Activated CD4-positive, alpha-beta T cell treated with anti-CD3 and anti-CD28 coated beads for 36 hours (primary cell): ENCODE measurements at regions of chr14 and their contacts with region 1.

Region 1: DNA sequence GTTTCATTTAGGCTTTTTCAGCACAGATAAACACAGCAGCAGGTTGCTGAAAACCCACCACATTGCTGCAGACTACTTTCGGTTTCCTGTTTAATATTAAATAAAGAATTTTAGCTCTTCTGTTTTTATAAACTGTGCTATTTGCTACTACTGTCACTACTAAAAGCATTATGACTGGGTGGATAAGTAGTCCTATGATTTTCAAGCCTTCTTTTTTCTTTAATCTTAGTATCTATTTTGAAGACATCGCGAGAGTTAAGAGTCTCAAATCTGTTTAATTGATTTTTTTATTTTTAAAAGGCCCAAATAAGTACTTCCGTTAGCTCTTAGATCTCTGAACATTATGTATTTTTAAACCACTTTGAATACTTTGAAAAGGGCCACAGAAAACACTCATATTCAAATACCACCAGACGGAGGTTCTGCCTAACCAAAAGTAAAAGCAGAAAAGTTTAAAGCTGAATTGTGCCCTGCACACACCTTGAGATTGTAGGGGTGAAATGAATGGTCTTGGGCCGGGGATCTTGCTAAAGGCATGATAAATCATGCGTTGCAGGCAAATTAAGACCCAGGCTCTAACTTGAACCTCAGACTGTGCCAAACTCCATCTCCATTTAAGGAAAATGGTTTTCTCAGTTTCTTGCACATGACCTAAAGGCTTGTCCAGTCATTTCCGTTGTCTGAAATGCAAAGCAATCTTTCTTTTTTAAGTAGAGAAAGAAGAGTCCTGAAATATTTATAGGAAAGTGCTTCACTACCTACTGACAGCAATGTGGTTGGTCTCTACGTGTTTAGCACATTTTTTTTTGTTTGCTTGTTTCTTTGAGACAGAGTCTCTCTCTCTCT is 13.6 kb upstream of the FOXN3 start:
- DNase-seq: peak; percentile 75
- ATAC-seq: peak; percentile 89
- H3K4me3 Mint-ChIP-seq: peak overlapping the region; percentile 71
- H3K27ac Mint-ChIP-seq: peak overlapping the region; percentile 94
- H3K4me1 Mint-ChIP-seq: peaks cover 70% of the 10 kb centered on the region
- H3K27me3 Mint-ChIP-seq: no peaks in the 10 kb centered on the region

Region 2: GRCh38 chr14:88792572-88793258 is 637.9 kb before region 1 on chr14 and contains the start of gene EML5:
- CTCF ChIA-PET with region 1: no interaction called
- POLR2A ChIA-PET with region 1: no interaction called
- intact Hi-C with region 1: loop called in 1 of 2 experiments (anchors 5 kb)
- DNase-seq: peak; percentile 90
- ATAC-seq: peak; percentile 76
- H3K4me3 Mint-ChIP-seq: peak within 1 kb of the TSS; percentile 87
- H3K27ac Mint-ChIP-seq: peak within 1 kb of the TSS; percentile 87
- H3K4me1 Mint-ChIP-seq: peaks cover 26% of the 10 kb centered on the region
- H3K27me3 Mint-ChIP-seq: no peaks in the 10 kb centered on the region
- total RNA-seq, gene EML5: 8.1 TPM

Region 3: GRCh38 chr14:89406941-89407340 is 23.7 kb before region 1 on chr14:
- CTCF ChIA-PET with region 1: interaction called, 11 read pairs
- POLR2A ChIA-PET with region 1: no interaction called
- intact Hi-C with region 1: no loop called
- DNase-seq: no peak
- ATAC-seq: no peak
- H3K4me3 Mint-ChIP-seq: no peak overlapping the region
- H3K27ac Mint-ChIP-seq: peak overlapping the region; percentile 86
- H3K4me1 Mint-ChIP-seq: peaks cover 76% of the 10 kb centered on the region
- H3K27me3 Mint-ChIP-seq: no peaks in the 10 kb centered on the region

Region 4: DNA sequence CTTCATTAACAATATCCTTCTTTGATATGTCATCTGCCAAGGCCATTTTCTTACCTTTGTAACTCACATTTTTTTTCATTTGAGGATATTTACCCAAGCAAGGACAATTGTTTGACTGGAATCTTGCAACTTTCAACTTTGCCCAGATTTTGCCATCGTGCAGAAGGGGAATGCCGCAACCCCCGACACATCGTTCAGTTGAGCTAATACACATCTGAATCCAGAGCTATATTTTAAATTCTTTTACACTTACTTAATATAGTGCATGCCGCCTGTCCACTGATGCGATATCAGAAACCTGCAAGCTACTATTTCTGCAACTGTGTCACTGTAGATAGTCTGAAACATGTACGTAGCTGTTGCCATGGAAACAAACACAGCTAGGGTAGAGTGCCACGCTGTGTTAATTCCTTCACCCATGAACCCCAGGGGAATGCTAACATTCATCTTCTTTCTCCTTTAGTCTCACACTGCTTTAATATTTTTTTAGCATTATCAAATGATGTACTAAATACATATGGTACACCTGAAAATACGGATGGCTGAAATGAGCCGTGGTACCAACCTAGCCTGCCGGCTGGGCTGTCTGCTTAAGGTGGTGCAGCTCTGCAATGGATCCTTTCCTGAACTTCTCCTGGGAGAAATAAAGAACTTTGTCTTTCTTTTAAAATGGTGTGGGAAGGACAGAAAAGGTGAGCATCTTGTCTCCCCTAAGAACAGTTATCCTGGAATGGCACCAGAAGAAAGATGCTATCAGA is 63.4 kb after region 1 on chr14:
- CTCF ChIA-PET with region 1: no interaction called
- POLR2A ChIA-PET with region 1: no interaction called
- intact Hi-C with region 1: no loop called
- DNase-seq: no peak
- ATAC-seq: no peak
- H3K4me3 Mint-ChIP-seq: no peak overlapping the region
- H3K27ac Mint-ChIP-seq: no peak overlapping the region
- H3K4me1 Mint-ChIP-seq: peaks cover 9% of the 10 kb centered on the region
- H3K27me3 Mint-ChIP-seq: no peaks in the 10 kb centered on the region

Region 5: GRCh38 chr14:89504602-89505313 is 74.1 kb after region 1 on chr14:
- CTCF ChIA-PET with region 1: no interaction called
- POLR2A ChIA-PET with region 1: interaction called, 3 read pairs
- intact Hi-C with region 1: loop called in 1 of 2 experiments (anchors 1 kb)
- DNase-seq: peak; percentile 59
- ATAC-seq: peak; percentile 40
- H3K4me3 Mint-ChIP-seq: no peak overlapping the region
- H3K27ac Mint-ChIP-seq: peak overlapping the region; percentile 23
- H3K4me1 Mint-ChIP-seq: peaks cover 53% of the 10 kb centered on the region
- H3K27me3 Mint-ChIP-seq: no peaks in the 10 kb centered on the region

Region 6: DNA sequence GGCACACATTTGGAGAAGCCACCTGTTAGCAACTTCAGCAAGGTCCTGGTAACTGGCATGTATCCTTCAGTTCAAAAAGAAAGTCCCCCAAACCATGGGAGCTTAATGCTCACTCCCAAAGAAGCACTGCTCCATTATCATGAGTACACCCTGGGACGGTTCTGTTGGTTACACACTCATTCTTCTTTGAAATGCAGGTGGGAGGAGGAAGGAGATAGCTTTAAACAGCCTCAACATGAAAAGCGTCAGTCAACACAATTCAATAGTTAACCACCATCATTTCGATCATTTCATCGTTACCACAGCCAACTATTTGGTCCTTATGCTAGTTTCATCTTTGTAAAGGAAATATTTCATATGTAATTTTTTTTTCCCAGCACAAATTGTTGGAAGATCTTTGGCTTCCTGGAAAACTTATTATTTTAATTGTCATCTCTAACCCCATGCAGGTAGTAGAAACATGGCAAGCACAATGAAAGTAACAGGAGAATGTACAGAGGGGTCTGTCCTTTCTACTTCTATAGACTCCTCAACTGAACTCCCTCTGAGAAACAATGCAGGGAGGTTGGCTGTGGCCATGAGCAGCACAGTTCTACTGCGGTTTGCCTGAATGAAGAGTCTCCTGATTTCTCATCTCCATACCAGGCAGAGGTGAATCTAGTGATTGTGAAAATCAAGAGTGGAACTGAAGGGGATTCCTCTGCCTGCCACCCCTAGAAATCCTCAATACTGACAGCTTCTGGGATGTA is 182.8 kb after region 1 on chr14:
- CTCF ChIA-PET with region 1: interaction called, 4 read pairs
- POLR2A ChIA-PET with region 1: interaction called, 4 read pairs
- intact Hi-C with region 1: loop called in 1 of 2 experiments (anchors 1 kb)
- DNase-seq: peak; percentile 64
- ATAC-seq: peak; percentile 70
- H3K4me3 Mint-ChIP-seq: peak overlapping the region; percentile 62
- H3K27ac Mint-ChIP-seq: peak overlapping the region; percentile 92
- H3K4me1 Mint-ChIP-seq: peaks cover 80% of the 10 kb centered on the region
- H3K27me3 Mint-ChIP-seq: no peaks in the 10 kb centered on the region

Region 7: GRCh38 chr14:89915114-89915878 is 484.7 kb after region 1 on chr14:
- CTCF ChIA-PET with region 1: no interaction called
- POLR2A ChIA-PET with region 1: no interaction called
- intact Hi-C with region 1: loop called in 1 of 2 experiments (anchors 10 kb)
- DNase-seq: peak; percentile 73
- ATAC-seq: no peak
- H3K4me3 Mint-ChIP-seq: no peak overlapping the region
- H3K27ac Mint-ChIP-seq: no peak overlapping the region
- H3K4me1 Mint-ChIP-seq: peaks cover 3% of the 10 kb centered on the region
- H3K27me3 Mint-ChIP-seq: peaks cover 3% of the 10 kb centered on the region

Region 8: GRCh38 chr14:90019824-90020523 is 589.4 kb after region 1 on chr14:
- CTCF ChIA-PET with region 1: no interaction called
- POLR2A ChIA-PET with region 1: no interaction called
- intact Hi-C with region 1: no loop called
- DNase-seq: no peak
- ATAC-seq: no peak
- H3K4me3 Mint-ChIP-seq: no peak overlapping the region
- H3K27ac Mint-ChIP-seq: no peak overlapping the region
- H3K4me1 Mint-ChIP-seq: peaks cover 5% of the 10 kb centered on the region
- H3K27me3 Mint-ChIP-seq: no peaks in the 10 kb centered on the region